Calu3 (cell line): ENCODE measurements at regions of chr2 and their contacts with region 1.

Region 1: DNA sequence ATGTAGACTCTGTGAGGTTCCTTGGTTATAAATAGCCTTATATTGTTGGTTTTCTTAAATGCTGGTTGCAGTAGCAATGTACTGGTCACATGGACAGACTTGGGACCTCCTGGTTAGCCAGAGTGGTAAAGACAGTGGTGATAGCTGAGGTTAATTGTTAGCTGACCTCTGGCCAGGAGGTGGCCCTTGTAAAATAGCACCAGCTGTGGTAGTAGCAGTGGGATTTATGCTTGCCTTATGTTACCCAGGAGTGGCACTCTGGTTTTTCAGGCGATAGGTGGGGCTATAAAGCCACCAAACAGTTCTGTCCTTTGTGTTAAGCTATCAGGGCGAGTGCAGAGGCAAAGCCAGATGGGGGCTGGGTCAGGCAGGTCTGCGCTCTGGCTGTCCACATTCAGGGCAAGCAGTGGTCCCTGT is 94.8 kb upstream of the SRD5A2 start:
- DNase-seq: peak; percentile 73
- H3K4me3 Mint-ChIP-seq: peak overlapping the region; percentile 36
- H3K27ac Mint-ChIP-seq: no peak overlapping the region
- H3K4me1 Mint-ChIP-seq: peaks cover 18% of the 10 kb centered on the region
- H3K27me3 Mint-ChIP-seq: no peaks in the 10 kb centered on the region
- CTCF ChIP-seq: peak; percentile 21

Region 2: DNA sequence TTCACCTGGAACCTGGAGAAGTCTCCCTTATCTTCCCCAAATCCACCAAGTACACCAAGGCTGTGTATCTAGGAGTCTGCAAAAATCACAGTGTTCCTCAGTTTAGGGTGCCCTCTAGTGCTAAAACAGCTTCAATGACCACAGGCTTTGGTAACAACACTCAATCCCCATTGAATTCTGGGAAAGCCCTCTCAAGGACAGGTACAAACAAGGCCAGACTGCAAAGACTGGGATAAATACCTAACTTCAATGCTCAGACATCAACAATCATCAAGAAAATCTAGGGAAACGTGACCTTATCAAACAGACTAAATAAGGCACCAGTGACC is 54.2 kb after region 1 on chr2:
- CTCF ChIA-PET with region 1: interaction called, 11 read pairs
- intact Hi-C with region 1: loop called (anchors 5 kb)
- DNase-seq: no peak
- H3K4me3 Mint-ChIP-seq: no peak overlapping the region
- H3K27ac Mint-ChIP-seq: no peak overlapping the region
- H3K4me1 Mint-ChIP-seq: peaks cover 30% of the 10 kb centered on the region
- H3K27me3 Mint-ChIP-seq: no peaks in the 10 kb centered on the region
- CTCF ChIP-seq: peak; percentile 16

Region 3: GRCh38 chr2:31831585-31831984 is 156.1 kb after region 1 on chr2:
- CTCF ChIA-PET with region 1: interaction called, 15 read pairs
- intact Hi-C with region 1: no loop called
- DNase-seq: no peak
- H3K4me3 Mint-ChIP-seq: no peak overlapping the region
- H3K27ac Mint-ChIP-seq: no peak overlapping the region
- H3K4me1 Mint-ChIP-seq: no peaks in the 10 kb centered on the region
- H3K27me3 Mint-ChIP-seq: no peaks in the 10 kb centered on the region
- CTCF ChIP-seq: no peak

Region 4: DNA sequence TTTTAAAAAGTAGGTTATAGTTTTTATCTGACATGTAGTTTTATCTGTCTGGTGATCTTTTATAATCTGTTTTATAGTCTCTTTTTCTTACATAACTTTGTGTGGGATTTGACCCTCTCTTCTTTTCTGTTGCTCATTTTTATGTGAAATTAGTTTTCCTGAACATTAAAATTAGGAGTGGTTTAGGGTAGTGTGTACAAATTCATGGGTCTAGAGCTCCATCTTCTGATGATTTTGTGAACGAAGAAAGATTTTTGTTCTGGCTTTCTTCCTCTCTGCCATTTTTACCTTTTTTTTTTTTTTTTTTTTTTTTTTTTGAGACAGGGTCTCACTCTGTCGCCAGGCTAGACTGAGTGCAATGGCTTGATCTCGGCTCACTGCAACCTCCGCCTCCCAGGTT is 536.8 kb after region 1 on chr2:
- CTCF ChIA-PET with region 1: no interaction called
- intact Hi-C with region 1: loop called (anchors 10 kb)
- DNase-seq: no peak
- H3K4me3 Mint-ChIP-seq: no peak overlapping the region
- H3K27ac Mint-ChIP-seq: no peak overlapping the region
- H3K4me1 Mint-ChIP-seq: no peaks in the 10 kb centered on the region
- H3K27me3 Mint-ChIP-seq: no peaks in the 10 kb centered on the region
- CTCF ChIP-seq: no peak